Sigmoid colon (tissue), 7 donors: ENCODE measurements at regions of chr17 and their contacts with region 1.

Region 1: DNA sequence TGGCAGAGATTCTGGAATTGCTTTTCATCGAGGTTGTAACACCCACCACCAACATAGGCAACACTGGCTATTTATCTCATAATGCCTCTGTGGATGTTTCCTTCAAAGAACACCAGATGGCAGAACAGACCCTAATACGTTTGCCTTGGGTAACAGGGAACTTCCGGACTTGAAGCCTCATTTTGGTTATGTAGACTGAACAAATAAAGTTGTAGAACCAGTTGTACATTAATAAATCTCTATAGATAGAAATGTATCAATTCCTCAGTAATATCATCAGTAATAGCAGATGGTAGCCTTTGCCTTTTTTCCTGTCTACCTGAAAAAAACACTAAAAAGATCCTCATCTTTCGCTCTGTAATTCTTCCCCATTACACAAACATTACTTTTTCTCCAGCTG is 25.9 kb upstream of the APOH start:
- DNase-seq: no peak
- H3K4me3 ChIP-seq: no peak overlapping the region
- H3K27ac ChIP-seq: no peak overlapping the region
- H3K4me1 ChIP-seq: peaks cover 0 to 3% (median 0%) of the 10 kb centered on the region in 4 donors
- H3K27me3 ChIP-seq: no peaks in the 10 kb centered on the region
- CTCF ChIP-seq: peak; percentile 55 to 92 (median 69)
- EP300 ChIP-seq: no peak
- POLR2A ChIP-seq: no peak

Region 2: GRCh38 chr17:66185867-66186266 is 69.2 kb before region 1 on chr17:
- intact Hi-C with region 1: no loop called
- DNase-seq: no peak
- H3K4me3 ChIP-seq: no peak overlapping the region
- H3K27ac ChIP-seq: no peak overlapping the region
- H3K4me1 ChIP-seq: peaks cover 0 to 16% (median 12%) of the 10 kb centered on the region in 4 donors
- H3K27me3 ChIP-seq: no peaks in the 10 kb centered on the region
- CTCF ChIP-seq: no peak
- EP300 ChIP-seq: no peak
- POLR2A ChIP-seq: no peak

Region 3: DNA sequence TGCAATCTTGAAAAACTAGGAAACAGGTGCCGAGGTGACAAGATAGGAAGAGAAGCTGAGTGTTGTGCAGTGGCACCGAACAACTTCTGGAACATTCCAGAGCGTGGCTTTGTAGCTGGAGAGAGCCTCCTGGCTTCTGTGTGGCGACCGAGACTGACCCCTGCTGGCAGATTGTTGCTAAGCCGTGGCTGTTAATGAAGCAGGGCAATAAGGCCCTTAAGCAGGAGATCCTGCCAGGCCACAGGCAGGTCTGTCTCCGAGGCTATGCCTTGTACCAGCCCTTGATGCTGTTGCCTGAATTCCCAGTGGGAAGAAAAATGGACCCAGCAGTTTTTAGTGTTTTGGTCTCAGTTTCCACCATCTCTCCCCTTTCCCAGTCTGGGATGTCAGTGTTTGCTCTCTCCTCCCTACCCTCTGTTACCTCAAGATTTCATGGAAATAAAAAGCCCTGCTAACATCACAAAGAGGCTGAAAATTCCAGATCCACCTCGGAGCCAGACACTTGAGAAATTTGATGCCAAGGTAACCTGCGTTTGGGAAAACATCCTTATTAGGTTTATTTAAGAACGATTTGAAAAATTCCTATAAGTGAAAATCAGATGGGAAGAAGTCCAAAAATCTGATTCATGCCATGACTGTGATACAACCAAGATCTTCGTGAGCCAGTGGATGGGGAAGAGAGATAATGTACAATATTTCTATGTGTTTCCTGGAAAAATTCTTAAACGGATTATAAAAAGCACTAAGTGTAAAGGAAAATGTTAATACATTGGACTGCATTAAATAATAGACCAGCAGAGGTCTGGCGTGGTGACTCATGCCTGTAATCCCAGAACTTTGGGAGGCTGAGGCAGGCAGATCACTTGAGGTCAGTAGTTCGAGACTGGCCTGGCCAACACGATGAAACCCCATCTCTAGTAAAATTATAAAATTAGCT is 312.4 kb after region 1 on chr17:
- intact Hi-C with region 1: loop called (anchors 1 kb)
- DNase-seq: peak; percentile 87
- H3K4me3 ChIP-seq: no peak overlapping the region
- H3K27ac ChIP-seq: peak overlapping the region in 2 of 4 donors; percentile 1 to 30
- H3K4me1 ChIP-seq: peaks cover 0 to 33% (median 20%) of the 10 kb centered on the region in 4 donors
- H3K27me3 ChIP-seq: no peaks in the 10 kb centered on the region
- CTCF ChIP-seq: peak; percentile 70 to 83 (median 73)
- EP300 ChIP-seq: no peak
- POLR2A ChIP-seq: no peak

Region 4: GRCh38 chr17:66625311-66625775 is 370.2 kb after region 1 on chr17:
- intact Hi-C with region 1: loop called (anchors 2 kb)
- DNase-seq: no peak
- H3K4me3 ChIP-seq: no peak overlapping the region
- H3K27ac ChIP-seq: no peak overlapping the region
- H3K4me1 ChIP-seq: peaks cover 0 to 57% (median 46%) of the 10 kb centered on the region in 4 donors
- H3K27me3 ChIP-seq: no peaks in the 10 kb centered on the region
- CTCF ChIP-seq: peak in 2 of 4 experiments; percentile 56 to 61
- EP300 ChIP-seq: no peak
- POLR2A ChIP-seq: no peak

Region 5: DNA sequence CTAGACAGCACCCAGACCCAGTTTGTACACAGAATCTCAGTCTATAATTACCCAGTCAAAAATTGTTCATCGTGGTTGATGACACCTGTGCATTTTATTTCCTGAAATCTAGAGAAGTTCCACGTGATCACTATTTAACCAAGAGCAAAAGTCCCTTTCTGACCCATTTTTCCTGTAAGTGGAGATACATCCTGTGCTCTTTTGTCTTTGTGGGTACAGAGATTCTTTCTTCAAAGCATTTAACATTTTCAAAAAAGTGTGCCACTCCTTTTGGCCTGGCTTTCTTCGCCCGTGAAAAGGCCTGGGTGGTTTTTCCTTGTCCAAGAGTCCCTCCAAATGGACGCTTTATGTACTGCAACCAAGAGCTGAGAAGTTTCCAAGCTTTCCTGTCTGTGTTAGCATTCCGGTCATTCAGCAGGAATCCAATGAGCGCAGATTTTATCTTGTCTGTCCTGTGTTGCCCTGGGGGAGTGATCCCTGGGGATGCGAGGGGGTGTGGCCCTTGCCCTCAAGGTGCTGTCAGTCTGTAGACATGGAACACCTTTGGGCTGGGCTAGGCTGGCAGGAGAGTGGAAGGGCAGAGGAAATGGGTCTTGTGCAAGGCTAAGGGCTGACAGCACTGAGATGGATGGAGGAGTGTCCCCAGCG is 418.7 kb after region 1 on chr17:
- intact Hi-C with region 1: loop called (anchors 1 kb)
- DNase-seq: peak; percentile 66
- H3K4me3 ChIP-seq: no peak overlapping the region
- H3K27ac ChIP-seq: peak overlapping the region; percentile 10 to 66 (median 55)
- H3K4me1 ChIP-seq: peaks cover 0 to 33% (median 31%) of the 10 kb centered on the region in 4 donors
- H3K27me3 ChIP-seq: no peaks in the 10 kb centered on the region
- CTCF ChIP-seq: peak; percentile 62 to 84 (median 74)
- EP300 ChIP-seq: no peak
- POLR2A ChIP-seq: no peak